Gastrocnemius medialis (tissue), 4 donors: ENCODE measurements at regions of chr18 and their contacts with region 1.

Region 1: DNA sequence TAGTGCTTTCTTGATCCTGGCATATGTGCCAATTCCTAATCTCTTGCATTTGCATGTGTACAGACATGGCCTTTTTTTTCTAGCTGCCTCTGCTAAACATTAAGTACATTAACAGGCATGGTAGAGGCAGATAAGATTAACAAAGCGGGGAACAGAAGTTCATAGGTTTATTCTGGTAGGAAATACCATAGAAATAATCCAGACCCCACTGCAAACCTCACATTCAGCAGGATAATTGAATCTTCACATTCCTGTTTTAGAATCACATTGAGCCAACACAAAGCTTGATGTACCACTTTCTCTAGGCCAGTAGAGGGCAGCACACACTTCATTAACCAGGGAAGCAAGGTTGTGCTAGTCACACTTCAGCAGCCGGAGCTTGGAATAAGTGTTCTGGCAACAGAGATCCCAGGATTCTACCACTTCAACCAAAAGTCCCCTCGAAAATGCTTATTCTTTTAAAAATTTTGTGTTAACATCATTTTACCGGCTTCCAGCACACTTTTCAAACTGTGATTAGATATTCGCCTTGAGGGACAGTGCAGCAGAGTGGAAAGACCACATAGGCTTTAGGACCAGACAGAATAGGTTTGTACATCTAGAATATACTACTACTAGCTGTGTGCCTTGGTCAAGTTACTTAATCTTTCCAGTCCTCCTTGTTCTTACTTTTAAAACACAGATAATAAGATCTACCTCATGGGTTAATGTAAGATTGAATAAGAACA is 420.2 kb upstream of the CHST9 start:
- DNase-seq: peak in 1 of 2 donors; percentile 27
- ATAC-seq: peak; percentile 75
- H3K4me3 ChIP-seq: no peak overlapping the region
- H3K27ac ChIP-seq: no peak overlapping the region
- H3K4me1 ChIP-seq: no peaks in the 10 kb centered on the region
- H3K27me3 ChIP-seq: no peaks in the 10 kb centered on the region
- CTCF ChIP-seq: peak; percentile 41 to 72 (median 56)
- POLR2A ChIP-seq: no peak

Region 2: DNA sequence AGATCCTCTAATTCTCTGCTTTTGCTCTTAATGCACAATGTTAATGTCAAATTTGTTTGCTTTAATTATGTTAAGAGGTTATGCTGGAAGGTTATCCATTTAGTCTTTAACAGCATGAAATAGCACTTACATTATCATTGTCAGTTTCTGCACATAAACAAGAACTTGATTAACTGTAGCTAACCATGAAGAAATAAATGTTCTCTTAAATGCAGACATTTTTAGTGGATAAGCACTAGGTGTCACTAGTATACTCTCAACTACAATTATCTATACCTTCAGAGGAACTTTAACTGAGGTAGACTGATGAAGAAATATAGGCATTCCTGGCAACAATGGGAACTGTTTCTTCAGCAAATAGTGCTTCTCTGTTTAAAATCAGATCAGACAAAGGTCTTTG is 241.4 kb before region 1 on chr18:
- in situ Hi-C with region 1: loop called in 1 of 4 experiments (anchors 10 kb)
- intact Hi-C with region 1: no loop called
- DNase-seq: no peak
- ATAC-seq: peak in 1 of 2 donors; percentile 36
- H3K4me3 ChIP-seq: no peak overlapping the region
- H3K27ac ChIP-seq: no peak overlapping the region
- H3K4me1 ChIP-seq: no peaks in the 10 kb centered on the region
- H3K27me3 ChIP-seq: no peaks in the 10 kb centered on the region
- CTCF ChIP-seq: peak in 3 of 5 experiments; percentile 25 to 46 (median 36)
- POLR2A ChIP-seq: no peak

Region 3: DNA sequence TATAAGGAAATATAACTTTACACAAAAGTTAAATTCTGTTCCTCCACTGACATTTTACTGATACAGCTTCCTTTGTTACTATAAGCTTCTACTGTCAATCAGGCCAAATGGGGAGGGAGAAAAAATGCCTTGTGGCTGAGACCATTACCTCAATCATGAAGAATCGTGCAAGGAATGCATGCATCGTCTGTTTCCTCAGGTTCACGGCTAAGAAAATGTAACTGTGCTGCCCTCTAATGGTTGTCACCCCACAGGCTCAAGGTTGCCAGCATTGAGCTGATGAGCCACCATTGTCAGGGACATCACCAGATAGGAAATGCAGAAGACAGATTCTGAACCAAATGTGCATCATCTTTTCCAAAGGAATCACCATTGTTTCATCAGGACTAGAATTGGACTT is 144.7 kb after region 1 on chr18:
- in situ Hi-C with region 1: loop called in 1 of 4 experiments (anchors 5 kb)
- intact Hi-C with region 1: no loop called
- DNase-seq: no peak
- ATAC-seq: no peak
- H3K4me3 ChIP-seq: no peak overlapping the region
- H3K27ac ChIP-seq: no peak overlapping the region
- H3K4me1 ChIP-seq: no peaks in the 10 kb centered on the region
- H3K27me3 ChIP-seq: no peaks in the 10 kb centered on the region
- CTCF ChIP-seq: peak in 2 of 5 experiments; percentile 24
- POLR2A ChIP-seq: no peak